Mammary epithelial cell (primary cell): ENCODE measurements at regions of chr6 and their contacts with region 1.

Region 1: GRCh38 chr6:106799008-106799894 is 169.9 kb downstream of the QRSL1 start:
- DNase-seq: peak; percentile 96
- H3K4me3 ChIP-seq: no peak overlapping the region
- H3K27ac ChIP-seq: peak overlapping the region; percentile 90
- H3K4me1 ChIP-seq: peaks cover 38% of the 10 kb centered on the region
- H3K27me3 ChIP-seq: no peaks in the 10 kb centered on the region
- CTCF ChIP-seq: no peak

Region 2: DNA sequence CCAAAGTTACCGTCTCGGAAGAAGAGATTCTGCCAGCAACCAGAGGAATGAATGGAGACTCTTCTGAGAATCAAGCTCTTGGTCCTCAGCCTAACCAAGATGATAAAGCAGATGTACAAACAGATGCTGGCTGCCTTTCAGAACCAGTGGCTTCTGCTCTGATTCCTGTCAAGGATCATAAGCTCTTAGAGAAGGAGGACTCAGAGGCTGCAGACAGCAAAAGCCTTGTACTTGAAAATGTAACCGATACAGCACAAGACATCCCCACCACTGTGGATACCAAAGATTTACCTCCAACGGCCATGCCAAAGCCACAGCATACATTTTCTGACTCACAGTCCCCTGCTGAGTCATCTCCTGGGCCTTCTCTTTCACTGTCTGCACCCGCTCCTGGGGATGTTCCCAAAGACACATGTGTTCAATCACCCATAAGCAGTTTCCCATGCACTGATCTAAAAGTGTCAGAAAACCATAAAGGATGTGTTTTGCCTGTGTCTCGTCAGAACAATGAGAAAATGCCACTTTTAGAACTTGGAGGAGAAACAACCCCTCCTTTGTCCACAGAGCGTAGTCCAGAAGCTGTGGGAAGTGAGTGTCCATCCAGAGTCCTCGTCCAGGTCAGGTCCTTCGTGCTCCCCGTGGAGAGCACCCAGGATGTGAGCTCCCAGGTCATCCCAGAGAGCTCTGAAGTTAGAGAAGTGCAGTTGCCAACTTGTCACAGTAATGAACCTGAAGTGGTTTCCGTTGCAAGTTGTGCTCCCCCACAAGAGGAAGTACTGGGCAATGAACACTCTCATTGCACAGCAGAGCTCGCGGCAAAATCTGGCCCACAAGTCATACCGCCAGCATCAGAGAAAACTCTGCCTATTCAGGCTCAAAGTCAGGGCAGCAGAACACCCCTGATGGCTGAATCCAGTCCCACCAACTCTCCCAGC is 279.5 kb before region 1 on chr6:
- CTCF ChIA-PET with region 1: no interaction called
- dilution Hi-C with region 1: no loop called
- in situ Hi-C with region 1: no loop called
- intact Hi-C with region 1: no loop called
- DNase-seq: peak; percentile 96
- H3K4me3 ChIP-seq: peak overlapping the region in 1 of 3 experiments; percentile 21
- H3K27ac ChIP-seq: peak overlapping the region; percentile 94
- H3K4me1 ChIP-seq: peaks cover 34% of the 10 kb centered on the region
- H3K27me3 ChIP-seq: no peaks in the 10 kb centered on the region
- CTCF ChIP-seq: no peak

Region 3: GRCh38 chr6:106608062-106608668 is 191.1 kb before region 1 on chr6:
- CTCF ChIA-PET with region 1: no interaction called
- dilution Hi-C with region 1: no loop called
- in situ Hi-C with region 1: no loop called
- intact Hi-C with region 1: loop called (anchors 5 kb)
- DNase-seq: peak; percentile 66
- H3K4me3 ChIP-seq: no peak overlapping the region
- H3K27ac ChIP-seq: no peak overlapping the region
- H3K4me1 ChIP-seq: no peaks in the 10 kb centered on the region
- H3K27me3 ChIP-seq: no peaks in the 10 kb centered on the region
- CTCF ChIP-seq: peak; percentile 64 to 77

Region 4: GRCh38 chr6:106746660-106747059 is 52.6 kb before region 1 on chr6:
- CTCF ChIA-PET with region 1: no interaction called
- dilution Hi-C with region 1: loop called (anchors 5 kb)
- in situ Hi-C with region 1: no loop called
- intact Hi-C with region 1: loop called (anchors 5 kb)
- DNase-seq: peak; percentile 100
- H3K4me3 ChIP-seq: no peak overlapping the region
- H3K27ac ChIP-seq: peak overlapping the region; percentile 99
- H3K4me1 ChIP-seq: peaks cover 62% of the 10 kb centered on the region
- H3K27me3 ChIP-seq: no peaks in the 10 kb centered on the region
- CTCF ChIP-seq: no peak

Region 5: DNA sequence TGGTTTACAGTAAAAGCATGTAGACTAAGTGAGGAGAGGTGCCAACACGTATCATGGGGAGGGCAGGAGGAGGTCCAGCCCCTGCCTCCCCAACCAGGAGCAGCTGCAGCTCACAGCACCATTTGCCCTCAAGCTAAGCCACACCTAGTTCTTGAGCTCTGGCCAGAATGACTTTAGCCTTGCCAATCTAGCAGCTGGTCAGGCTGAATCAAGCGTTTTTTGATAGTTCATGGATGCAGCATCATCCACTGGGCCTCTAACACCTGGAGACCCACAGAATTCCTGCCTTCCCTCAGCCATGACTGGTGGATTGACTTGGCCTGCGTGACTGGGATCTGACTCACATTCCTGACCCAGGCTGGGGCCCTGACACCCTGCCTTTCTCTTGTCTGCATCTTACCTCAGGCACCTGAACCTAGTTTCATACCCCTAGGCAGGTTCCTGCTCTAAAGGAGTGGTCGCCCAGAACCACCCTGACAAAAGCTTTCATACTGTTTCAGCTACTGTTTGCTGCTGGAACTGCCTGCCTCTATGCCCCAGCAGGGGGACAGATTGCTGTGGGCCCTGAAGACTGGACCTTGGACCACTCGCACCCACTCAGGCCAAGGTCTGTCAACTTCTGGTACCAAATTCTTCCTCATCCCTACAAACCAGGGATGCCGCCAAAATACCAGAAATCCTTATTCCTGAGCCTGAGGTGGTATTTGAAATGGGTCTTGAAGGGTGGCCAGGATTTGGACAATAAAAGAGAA is 47.6 kb before region 1 on chr6:
- CTCF ChIA-PET with region 1: no interaction called
- dilution Hi-C with region 1: loop called (anchors 5 kb)
- in situ Hi-C with region 1: no loop called
- intact Hi-C with region 1: loop called (anchors 5 kb)
- DNase-seq: peak; percentile 100
- H3K4me3 ChIP-seq: no peak overlapping the region
- H3K27ac ChIP-seq: peak overlapping the region; percentile 91
- H3K4me1 ChIP-seq: peaks cover 40% of the 10 kb centered on the region
- H3K27me3 ChIP-seq: no peaks in the 10 kb centered on the region
- CTCF ChIP-seq: peak in 1 of 2 donors; percentile 25

Region 6: DNA sequence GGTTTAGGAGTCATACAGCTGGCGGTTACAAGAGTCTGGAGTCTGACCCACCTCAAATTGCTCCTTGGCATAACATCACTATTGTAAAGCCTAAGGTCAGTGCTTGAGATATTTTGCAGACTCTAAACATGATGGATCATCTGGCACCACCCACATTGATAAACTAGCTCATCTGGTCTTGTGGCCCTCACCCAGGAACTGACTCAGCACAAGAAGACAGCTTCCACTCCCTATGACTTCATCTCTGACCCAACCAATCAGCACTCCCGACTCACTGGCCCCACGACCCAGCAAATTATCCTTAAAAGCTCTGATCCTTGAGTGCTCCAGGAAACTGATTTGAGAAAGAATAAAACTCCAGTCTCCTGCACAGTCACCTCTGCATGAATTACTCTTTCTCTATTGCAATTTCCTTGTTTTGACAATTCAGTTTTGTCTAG is 59.4 kb after region 1 on chr6:
- CTCF ChIA-PET with region 1: no interaction called
- dilution Hi-C with region 1: no loop called
- in situ Hi-C with region 1: no loop called
- intact Hi-C with region 1: no loop called
- DNase-seq: peak; percentile 93
- H3K4me3 ChIP-seq: no peak overlapping the region
- H3K27ac ChIP-seq: peak overlapping the region; percentile 52
- H3K4me1 ChIP-seq: peaks cover 20% of the 10 kb centered on the region
- H3K27me3 ChIP-seq: no peaks in the 10 kb centered on the region
- CTCF ChIP-seq: no peak